CD4-positive, alpha-beta memory T cell (primary cell): ENCODE measurements at regions of chr15 and their contacts with region 1.

Region 1: DNA sequence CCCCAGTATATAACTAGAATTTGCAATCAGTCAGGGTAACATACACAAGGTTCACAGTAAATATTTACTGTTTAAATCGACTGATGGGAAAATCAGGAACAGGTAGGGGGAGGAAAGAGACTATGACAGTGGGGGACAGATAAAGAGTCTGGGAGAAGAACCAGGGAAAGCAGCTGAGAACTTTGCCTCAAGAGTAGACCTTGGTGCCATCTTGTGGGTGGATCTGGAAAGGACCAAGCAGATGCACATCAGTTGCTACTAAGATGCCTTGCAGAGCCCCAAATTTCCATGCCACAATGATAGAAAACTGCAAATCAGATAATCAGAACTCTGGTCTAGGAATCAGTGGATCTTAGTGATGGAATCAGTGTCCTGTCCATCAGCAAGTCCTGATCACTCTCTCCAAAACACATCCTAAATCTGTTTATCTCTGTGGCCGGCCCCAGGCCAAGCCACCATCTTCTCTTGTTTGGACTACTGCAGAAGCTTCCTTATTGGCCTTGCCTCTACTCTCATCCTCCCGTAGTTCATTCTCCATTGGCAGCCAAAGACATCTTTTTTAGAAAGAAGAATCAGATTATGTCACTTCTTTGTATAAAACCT is 62.7 kb downstream of the PDE8A start:
- DNase-seq: peak; percentile 31 to 46 (median 35)
- H3K4me3 ChIP-seq: no peak overlapping the region
- H3K4me3 Mint-ChIP-seq: no peak overlapping the region
- H3K27ac ChIP-seq: no peak overlapping the region
- H3K27ac Mint-ChIP-seq: peak overlapping the region in 5 of 7 donors; percentile 11 to 64 (median 50)
- H3K4me1 ChIP-seq: peaks cover 12% of the 10 kb centered on the region
- H3K4me1 Mint-ChIP-seq: peaks cover 12 to 37% (median 21%) of the 10 kb centered on the region in 4 donors
- H3K27me3 ChIP-seq: no peaks in the 10 kb centered on the region
- H3K27me3 Mint-ChIP-seq: no peaks in the 10 kb centered on the region

Region 2: DNA sequence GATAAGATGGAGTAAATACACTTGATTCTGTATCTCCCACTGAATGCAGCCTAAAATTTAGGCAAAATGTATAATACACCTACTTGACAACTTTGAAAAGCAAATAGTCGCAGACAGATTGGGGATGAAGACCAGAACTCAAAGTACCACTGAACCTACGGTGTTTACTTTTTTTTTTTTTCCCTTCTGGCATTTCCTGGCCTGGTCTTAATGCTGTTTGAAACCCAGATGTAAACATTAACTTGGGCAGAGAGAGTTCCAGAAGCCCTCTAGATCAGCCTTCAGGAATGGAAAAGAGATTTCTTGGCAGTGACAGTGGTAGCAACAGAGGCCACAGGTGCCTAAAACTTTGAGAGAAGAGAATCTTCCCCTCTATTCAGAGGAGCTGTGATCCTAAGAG is 199.4 kb before region 1 on chr15:
- CTCF ChIA-PET with region 1: interaction called, 10 read pairs
- POLR2A ChIA-PET with region 1: no interaction called
- intact Hi-C with region 1: loop called (anchors 1 kb)
- DNase-seq: no peak
- H3K4me3 ChIP-seq: no peak overlapping the region
- H3K4me3 Mint-ChIP-seq: no peak overlapping the region
- H3K27ac ChIP-seq: no peak overlapping the region
- H3K27ac Mint-ChIP-seq: no peak overlapping the region
- H3K4me1 ChIP-seq: no peaks in the 10 kb centered on the region
- H3K4me1 Mint-ChIP-seq: no peaks in the 10 kb centered on the region
- H3K27me3 ChIP-seq: no peaks in the 10 kb centered on the region
- H3K27me3 Mint-ChIP-seq: no peaks in the 10 kb centered on the region

Region 3: DNA sequence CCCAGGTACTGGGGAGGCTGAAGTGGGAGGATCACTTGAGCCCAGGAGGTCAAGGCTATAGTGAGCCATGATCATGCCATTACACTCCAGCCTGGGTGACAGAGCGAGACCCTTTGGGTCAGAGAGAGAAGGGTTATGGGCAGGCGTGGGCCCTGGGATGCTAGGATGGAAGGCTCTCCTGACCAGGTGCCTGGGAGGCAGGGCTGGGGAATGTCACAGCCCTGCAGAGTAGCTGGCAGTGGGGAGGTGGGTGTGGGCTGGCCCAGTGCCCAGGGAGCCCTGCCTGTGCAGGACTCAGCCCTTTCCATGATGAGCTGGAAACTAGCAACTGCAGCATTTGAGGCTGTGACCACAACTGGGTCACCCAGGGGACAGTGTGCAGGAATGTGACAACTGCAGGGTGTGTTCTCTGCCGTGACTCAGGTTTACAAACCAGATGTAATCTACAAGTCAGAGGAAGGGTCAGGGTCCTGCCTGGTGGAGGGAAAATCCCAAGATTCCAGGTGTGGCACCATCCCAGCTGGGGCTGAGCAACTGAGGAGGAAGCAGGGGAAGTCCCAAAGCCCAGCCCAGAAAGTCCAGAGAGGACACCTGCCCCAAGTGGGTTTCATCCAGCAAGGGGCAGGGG is 114.5 kb before region 1 on chr15:
- CTCF ChIA-PET with region 1: interaction called, 4 read pairs
- POLR2A ChIA-PET with region 1: no interaction called
- intact Hi-C with region 1: loop called (anchors 1 kb)
- DNase-seq: no peak
- H3K4me3 ChIP-seq: no peak overlapping the region
- H3K4me3 Mint-ChIP-seq: no peak overlapping the region
- H3K27ac ChIP-seq: no peak overlapping the region
- H3K27ac Mint-ChIP-seq: peak overlapping the region in 1 of 7 donors; percentile 68
- H3K4me1 ChIP-seq: no peaks in the 10 kb centered on the region
- H3K4me1 Mint-ChIP-seq: peaks cover 4 to 6% (median 5%) of the 10 kb centered on the region in 4 donors
- H3K27me3 ChIP-seq: no peaks in the 10 kb centered on the region
- H3K27me3 Mint-ChIP-seq: no peaks in the 10 kb centered on the region

Region 4: DNA sequence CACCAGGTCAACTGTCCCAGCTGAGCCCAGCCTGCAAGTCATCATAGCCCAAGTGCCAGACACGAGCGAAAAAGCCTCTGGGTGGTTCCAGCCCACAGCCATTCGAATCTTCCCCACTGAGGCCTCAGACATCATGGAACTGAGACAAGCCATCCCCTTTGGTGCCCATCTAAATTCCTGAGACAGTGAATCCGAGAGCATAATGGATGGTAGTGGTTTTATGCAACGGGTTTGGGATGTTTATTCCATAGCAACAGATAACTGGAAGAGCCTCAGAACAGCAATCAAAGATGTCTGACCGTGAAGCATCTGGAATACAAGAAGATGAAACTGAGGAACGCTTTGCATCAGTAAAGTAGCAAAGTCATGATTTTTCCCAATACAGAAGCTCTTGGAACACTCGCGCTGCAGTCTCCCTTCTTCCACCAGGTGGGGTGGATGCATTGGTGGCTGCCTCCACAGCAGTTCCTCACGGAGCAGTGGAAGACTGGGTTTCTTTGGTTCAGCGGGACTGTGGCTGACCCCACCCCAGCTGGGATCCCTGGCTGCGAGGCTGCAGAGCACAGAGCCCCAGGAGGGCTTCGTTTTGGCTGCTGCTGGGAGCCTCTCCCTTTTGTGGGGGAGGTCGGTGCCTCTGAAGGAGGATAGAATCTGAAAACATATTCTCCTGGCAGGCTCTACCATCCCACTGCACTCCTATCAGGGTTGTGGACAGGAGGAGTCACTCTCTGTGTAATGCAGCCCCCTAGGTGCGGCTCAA is 89.1 kb before region 1 on chr15:
- CTCF ChIA-PET with region 1: interaction called, 46 read pairs
- POLR2A ChIA-PET with region 1: no interaction called
- intact Hi-C with region 1: loop called (anchors 1 kb)
- DNase-seq: peak in 4 of 5 donors; percentile 32 to 37 (median 34)
- H3K4me3 ChIP-seq: no peak overlapping the region
- H3K4me3 Mint-ChIP-seq: peak overlapping the region in 3 of 8 donors; percentile 7 to 39 (median 37)
- H3K27ac ChIP-seq: no peak overlapping the region
- H3K27ac Mint-ChIP-seq: no peak overlapping the region
- H3K4me1 ChIP-seq: no peaks in the 10 kb centered on the region
- H3K4me1 Mint-ChIP-seq: peaks cover 6 to 11% (median 8%) of the 10 kb centered on the region in 4 donors
- H3K27me3 ChIP-seq: no peaks in the 10 kb centered on the region
- H3K27me3 Mint-ChIP-seq: peaks cover 0 to 9% of the 10 kb centered on the region in 2 donors

Region 5: DNA sequence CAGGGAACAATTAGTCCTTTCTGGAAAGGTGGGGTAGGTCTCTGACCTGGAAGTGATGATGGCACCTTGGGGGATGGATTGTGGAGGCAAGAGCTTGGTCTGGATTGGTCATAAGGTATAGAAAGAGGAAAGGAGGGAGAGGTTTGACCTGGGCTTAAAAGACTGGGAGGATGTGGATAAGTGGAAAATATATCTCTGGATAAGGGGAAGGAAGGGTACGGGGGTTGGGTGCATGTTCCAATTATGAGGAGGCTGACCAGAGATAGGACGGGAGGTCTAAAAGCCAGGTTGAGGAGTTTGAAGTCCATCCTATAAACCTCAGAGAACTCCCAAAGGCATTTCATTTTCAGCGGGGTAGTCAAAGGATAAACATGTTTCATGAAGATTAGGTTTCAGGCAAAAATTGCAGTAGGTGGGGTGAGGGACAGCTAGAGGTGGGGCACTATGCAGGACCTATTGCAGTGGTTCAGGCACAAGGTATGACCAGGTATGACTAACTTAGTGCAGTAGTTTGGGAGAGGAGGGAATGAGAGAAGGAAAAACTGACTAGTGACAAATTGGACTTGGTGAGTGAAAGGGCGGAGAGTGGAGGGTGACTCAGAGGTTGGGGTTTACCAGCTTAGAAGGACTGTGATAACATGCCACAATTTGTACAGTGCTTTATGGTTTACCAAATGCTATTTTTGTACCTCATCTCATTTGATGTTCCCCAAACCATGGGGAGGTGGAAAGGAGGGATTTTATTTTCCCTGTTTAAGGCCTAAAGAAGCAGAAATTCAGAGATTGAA is 52.0 kb before region 1 on chr15:
- CTCF ChIA-PET with region 1: interaction called, 18 read pairs
- POLR2A ChIA-PET with region 1: interaction called, 4 read pairs
- intact Hi-C with region 1: no loop called
- DNase-seq: peak in 1 of 5 donors; percentile 61
- H3K4me3 ChIP-seq: no peak overlapping the region
- H3K4me3 Mint-ChIP-seq: peak overlapping the region in 4 of 8 donors; percentile 12 to 55 (median 32)
- H3K27ac ChIP-seq: no peak overlapping the region
- H3K27ac Mint-ChIP-seq: peak overlapping the region in 6 of 7 donors; percentile 1 to 99 (median 76)
- H3K4me1 ChIP-seq: peaks cover 50% of the 10 kb centered on the region
- H3K4me1 Mint-ChIP-seq: peaks cover 38 to 64% (median 49%) of the 10 kb centered on the region in 4 donors
- H3K27me3 ChIP-seq: no peaks in the 10 kb centered on the region
- H3K27me3 Mint-ChIP-seq: no peaks in the 10 kb centered on the region

Region 6: GRCh38 chr15:85003593-85004312 is 40.6 kb before region 1 on chr15:
- CTCF ChIA-PET with region 1: no interaction called
- POLR2A ChIA-PET with region 1: no interaction called
- intact Hi-C with region 1: no loop called
- DNase-seq: no peak
- H3K4me3 ChIP-seq: no peak overlapping the region
- H3K4me3 Mint-ChIP-seq: peak overlapping the region in 1 of 8 donors; percentile 39
- H3K27ac ChIP-seq: no peak overlapping the region
- H3K27ac Mint-ChIP-seq: peak overlapping the region in 1 of 7 donors; percentile 70
- H3K4me1 ChIP-seq: peaks cover 44% of the 10 kb centered on the region
- H3K4me1 Mint-ChIP-seq: peaks cover 34 to 90% (median 58%) of the 10 kb centered on the region in 4 donors
- H3K27me3 ChIP-seq: no peaks in the 10 kb centered on the region
- H3K27me3 Mint-ChIP-seq: no peaks in the 10 kb centered on the region

Region 7: GRCh38 chr15:85030301-85031049 is 13.9 kb before region 1 on chr15:
- CTCF ChIA-PET with region 1: interaction called, 13 read pairs
- POLR2A ChIA-PET with region 1: interaction called, 3 read pairs
- intact Hi-C with region 1: no loop called
- DNase-seq: peak in 2 of 5 donors; percentile 17 to 51
- H3K4me3 ChIP-seq: no peak overlapping the region
- H3K4me3 Mint-ChIP-seq: peak overlapping the region in 7 of 8 donors; percentile 5 to 76 (median 53)
- H3K27ac ChIP-seq: no peak overlapping the region
- H3K27ac Mint-ChIP-seq: peak overlapping the region; percentile 38 to 86 (median 75)
- H3K4me1 ChIP-seq: peaks cover 55% of the 10 kb centered on the region
- H3K4me1 Mint-ChIP-seq: peaks cover 50 to 77% (median 59%) of the 10 kb centered on the region in 4 donors
- H3K27me3 ChIP-seq: no peaks in the 10 kb centered on the region
- H3K27me3 Mint-ChIP-seq: no peaks in the 10 kb centered on the region